Mucosa of descending colon (tissue), 3 donors: ENCODE measurements at regions of chr7 and their contacts with region 1.

Region 1: GRCh38 chr7:139995017-139995931 is 67.5 kb downstream of the PARP12 start:
- DNase-seq: no peak
- ATAC-seq: peak; percentile 10
- H3K4me3 ChIP-seq: no peak overlapping the region
- H3K4me1 ChIP-seq: no peaks in the 10 kb centered on the region
- CTCF ChIP-seq: no peak

Region 2: DNA sequence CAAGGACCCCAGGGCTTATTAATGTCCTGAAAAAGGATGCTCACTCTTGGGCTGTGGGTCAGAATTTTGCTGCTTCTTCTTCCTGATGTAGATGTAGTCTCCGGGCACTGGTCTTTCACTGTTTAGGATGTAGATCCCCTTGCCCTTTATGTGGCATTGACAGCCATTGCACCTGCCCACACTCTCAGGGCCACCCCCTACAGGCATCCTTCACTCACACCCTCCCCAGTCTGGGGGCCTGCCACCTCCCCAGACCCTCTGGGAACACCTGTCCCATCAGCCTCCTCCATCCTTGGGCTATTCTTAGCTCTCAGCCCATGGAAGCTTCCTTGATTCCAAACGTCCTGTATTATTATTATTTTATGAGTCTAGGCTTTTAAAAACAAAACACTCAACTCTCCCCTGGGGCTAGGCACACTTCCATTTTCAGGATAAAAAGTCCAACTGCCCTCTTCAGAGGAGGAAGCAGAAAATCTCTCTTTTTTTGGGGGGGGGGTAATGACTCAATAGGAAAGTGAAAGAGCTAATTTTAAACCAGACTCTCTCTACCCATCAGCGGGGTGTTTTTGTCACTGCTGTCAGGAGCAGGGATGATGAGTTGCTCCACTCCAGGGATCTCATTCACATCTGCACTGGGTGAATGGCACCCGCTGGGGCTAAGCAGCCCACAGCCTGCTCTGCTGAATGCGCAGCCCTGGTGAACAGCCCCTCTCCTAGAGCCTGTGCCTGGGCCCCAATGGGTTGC is 500.3 kb before region 1 on chr7:
- intact Hi-C with region 1: loop called in 1 of 2 experiments (anchors 10 kb)
- DNase-seq: no peak
- ATAC-seq: no peak
- H3K4me3 ChIP-seq: no peak overlapping the region
- H3K4me1 ChIP-seq: peaks cover 3% of the 10 kb centered on the region
- CTCF ChIP-seq: no peak